Heart left ventricle (tissue), 16 donors: ENCODE measurements at regions of chr1 and their contacts with region 1.

Region 1: GRCh38 chr1:30120245-30121000 is 603.0 kb downstream of the MATN1 start:
- DNase-seq: no peak
- ATAC-seq: peak in 1 of 4 donors; percentile 41
- H3K4me3 ChIP-seq: no peak overlapping the region
- H3K27ac ChIP-seq: peak overlapping the region in 1 of 12 donors; percentile 24
- H3K4me1 ChIP-seq: peaks cover 0 to 21% (median 10%) of the 10 kb centered on the region in 12 donors
- H3K27me3 ChIP-seq: peaks cover 0 to 2% (median 0%) of the 10 kb centered on the region in 9 donors
- CTCF ChIP-seq: no peak
- POLR2A ChIP-seq: no peak

Region 2: DNA sequence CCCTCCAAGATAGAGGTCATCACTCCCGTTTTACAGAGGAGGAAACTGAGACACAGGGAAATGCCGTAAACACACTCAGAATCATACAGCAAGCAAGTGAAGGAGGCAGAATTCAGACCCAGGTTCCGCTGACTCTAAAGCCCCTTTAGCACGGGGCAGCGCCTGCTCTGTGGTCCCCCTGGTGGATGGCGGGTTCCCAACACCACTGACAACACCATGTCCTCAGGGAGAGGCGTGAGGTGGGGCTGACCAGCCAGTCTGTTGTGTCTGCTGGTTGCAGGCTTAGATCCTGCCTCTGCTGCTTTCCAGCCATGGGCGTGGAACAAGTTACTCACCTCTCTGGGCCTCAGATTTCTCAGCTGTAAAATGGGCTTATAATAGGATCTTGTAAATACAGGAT is 14.3 kb before region 1 on chr1:
- intact Hi-C with region 1: no loop called
- DNase-seq: peak in 1 of 5 donors; percentile 28
- ATAC-seq: peak in 3 of 4 donors; percentile 35 to 70 (median 65)
- H3K4me3 ChIP-seq: no peak overlapping the region
- H3K27ac ChIP-seq: no peak overlapping the region
- H3K4me1 ChIP-seq: no peaks in the 10 kb centered on the region
- H3K27me3 ChIP-seq: peaks cover 0 to 67% (median 11%) of the 10 kb centered on the region in 9 donors
- CTCF ChIP-seq: peak; percentile 19 to 65 (median 35)
- POLR2A ChIP-seq: no peak

Region 3: DNA sequence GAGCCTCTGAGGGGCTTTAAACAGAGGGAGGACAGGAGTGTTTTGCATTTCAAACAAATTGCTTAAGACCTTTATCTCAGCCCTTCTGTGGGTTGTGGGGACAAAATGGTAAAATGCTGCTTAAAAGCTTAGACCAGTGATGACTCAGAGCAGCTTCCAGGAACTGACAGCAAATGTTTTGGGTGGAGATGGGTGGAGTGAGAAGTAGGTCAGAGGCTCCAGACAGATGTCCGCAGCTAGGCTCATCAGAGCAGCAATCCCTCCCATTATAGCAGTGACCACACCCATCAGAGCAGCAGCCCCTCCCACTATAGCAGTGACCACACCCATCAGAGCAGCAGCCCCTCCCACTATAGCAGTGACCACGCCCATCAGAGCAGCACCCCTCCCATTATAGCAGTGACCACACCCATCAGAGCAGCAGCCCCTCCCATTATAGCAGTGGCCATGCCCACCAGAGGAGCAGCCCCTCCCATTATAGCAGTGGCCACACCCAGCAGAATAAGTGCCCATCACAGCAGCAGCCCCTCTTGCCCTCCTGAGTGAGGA is 70.8 kb after region 1 on chr1:
- intact Hi-C with region 1: loop called in 2 of 10 experiments (anchors 5 kb)
- DNase-seq: peak in 1 of 5 donors; percentile 69
- ATAC-seq: peak; percentile 57 to 93 (median 83)
- H3K4me3 ChIP-seq: no peak overlapping the region
- H3K27ac ChIP-seq: peak overlapping the region in 5 of 12 donors; percentile 2 to 77 (median 46)
- H3K4me1 ChIP-seq: peaks cover 0 to 12% (median 4%) of the 10 kb centered on the region in 12 donors
- H3K27me3 ChIP-seq: peaks cover 0 to 18% (median 0%) of the 10 kb centered on the region in 9 donors
- CTCF ChIP-seq: no peak
- POLR2A ChIP-seq: no peak